Psoas muscle (tissue), 8 donors: ENCODE measurements at regions of chr5 and their contacts with region 1.

Region 1: GRCh38 chr5:146484714-146485391 is 31.1 kb downstream of the GPR151 start:
- DNase-seq: no peak
- ATAC-seq: no peak
- H3K4me3 ChIP-seq: no peak overlapping the region
- H3K27ac ChIP-seq: no peak overlapping the region
- H3K4me1 ChIP-seq: no peaks in the 10 kb centered on the region
- H3K27me3 ChIP-seq: no peaks in the 10 kb centered on the region
- CTCF ChIP-seq: no peak

Region 2: DNA sequence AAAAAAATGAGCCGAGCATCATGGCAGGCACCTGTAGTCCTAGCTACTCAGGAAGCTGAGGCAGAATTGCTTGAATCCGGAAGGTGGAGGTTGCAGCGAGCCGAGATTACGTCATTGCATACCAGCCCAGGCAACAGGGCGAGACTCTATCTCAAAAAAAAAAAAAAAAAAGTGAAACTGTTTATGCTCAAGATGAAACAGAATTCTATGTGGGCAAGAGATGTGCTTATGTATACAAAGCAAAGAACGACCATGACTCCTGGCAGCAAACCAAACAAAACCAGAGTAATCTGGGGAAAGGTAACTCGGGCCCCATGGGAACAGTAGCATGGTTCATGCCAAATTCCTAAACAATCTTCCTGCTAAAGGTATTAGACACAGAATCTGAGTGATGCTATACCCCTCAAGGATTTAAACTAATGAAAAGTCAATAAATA is 346.9 kb before region 1 on chr5:
- intact Hi-C with region 1: loop called in 1 of 2 experiments (anchors 10 kb)
- DNase-seq: no peak
- ATAC-seq: no peak
- H3K4me3 ChIP-seq: no peak overlapping the region
- H3K27ac ChIP-seq: no peak overlapping the region
- H3K4me1 ChIP-seq: no peaks in the 10 kb centered on the region
- H3K27me3 ChIP-seq: no peaks in the 10 kb centered on the region
- CTCF ChIP-seq: no peak